OCI-LY7 (cell line): ENCODE measurements at regions of chr14 and their contacts with region 1.

Region 1: DNA sequence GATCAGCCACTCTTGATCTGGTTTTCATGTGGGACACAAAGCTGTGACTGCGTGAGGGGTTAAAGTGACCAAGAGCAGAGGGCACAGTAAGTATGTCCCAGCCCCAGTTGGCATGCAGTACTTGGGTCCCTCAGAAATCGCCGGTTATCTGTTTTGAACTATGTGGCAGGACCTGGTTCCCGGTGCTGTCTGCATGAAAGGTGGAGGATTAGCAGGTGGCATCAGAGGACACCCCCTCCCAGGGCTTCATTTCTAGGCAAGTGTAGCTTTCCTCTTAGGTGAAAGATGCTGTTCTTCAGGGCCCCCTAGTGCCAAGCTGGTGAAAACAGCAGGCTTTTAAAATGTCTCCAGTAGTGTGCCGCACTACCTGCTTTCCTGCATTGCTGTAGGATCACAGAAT is 57.1 kb downstream of the ATG14 start:
- DNase-seq: peak; percentile 68
- H3K4me3 ChIP-seq: no peak overlapping the region
- H3K27ac ChIP-seq: no peak overlapping the region
- H3K4me1 ChIP-seq: peaks cover 5% of the 10 kb centered on the region
- CTCF ChIP-seq: peak; percentile 82

Region 2: DNA sequence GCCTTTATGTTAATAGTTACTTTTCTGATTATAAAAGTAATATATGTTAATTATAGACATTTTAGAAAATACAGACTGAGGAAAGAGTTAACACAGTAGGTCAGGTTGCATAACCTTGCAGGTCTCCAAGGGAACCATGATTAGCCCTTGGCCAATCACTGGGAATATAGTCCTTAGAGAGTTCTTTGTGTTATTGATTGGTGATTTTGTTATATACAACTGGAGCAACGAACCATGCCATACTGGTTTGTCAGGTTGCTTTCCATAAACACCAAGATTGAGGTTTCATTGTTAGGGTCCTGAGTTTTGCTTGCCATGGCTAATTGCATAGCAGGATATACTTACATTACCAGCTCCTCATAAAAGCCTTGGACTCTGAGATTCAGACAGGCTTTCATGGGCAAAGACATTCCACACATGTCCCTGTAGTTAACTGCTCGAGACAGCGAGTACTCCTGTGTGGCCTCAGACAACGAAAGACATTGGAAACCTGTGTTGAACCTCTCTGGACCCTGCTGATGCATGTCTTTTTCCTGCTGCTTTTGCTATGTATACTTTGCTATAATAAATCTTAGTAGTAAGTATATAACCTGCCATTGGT is 269.3 kb before region 1 on chr14:
- CTCF ChIA-PET with region 1: no interaction called
- POLR2A ChIA-PET with region 1: no interaction called
- intact Hi-C with region 1: loop called (anchors 10 kb)
- DNase-seq: no peak
- H3K4me3 ChIP-seq: no peak overlapping the region
- H3K27ac ChIP-seq: no peak overlapping the region
- H3K4me1 ChIP-seq: no peaks in the 10 kb centered on the region
- CTCF ChIP-seq: no peak

Region 3: DNA sequence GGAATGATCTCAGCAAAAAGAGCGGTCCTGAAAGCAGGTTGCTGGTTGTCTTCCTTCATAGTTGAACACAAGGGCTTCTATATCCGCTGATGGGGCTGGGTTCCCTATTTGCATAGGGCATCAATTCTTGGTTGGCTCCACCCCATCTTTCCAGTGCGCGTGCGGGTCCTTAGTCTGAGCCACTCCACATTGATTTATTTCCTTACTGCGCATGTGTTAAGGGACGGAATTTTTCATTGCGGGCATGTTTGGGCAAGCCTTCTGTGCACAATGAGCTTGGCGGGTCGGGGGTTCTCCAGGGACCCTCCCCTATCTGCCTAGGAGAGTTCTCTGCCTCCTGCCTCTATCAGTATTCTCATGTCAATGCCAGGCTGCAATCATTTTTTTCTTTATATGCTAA is 141.9 kb before region 1 on chr14:
- CTCF ChIA-PET with region 1: interaction called, 3 read pairs
- POLR2A ChIA-PET with region 1: no interaction called
- intact Hi-C with region 1: loop called (anchors 1 kb)
- DNase-seq: no peak
- H3K4me3 ChIP-seq: no peak overlapping the region
- H3K27ac ChIP-seq: no peak overlapping the region
- H3K4me1 ChIP-seq: no peaks in the 10 kb centered on the region
- CTCF ChIP-seq: no peak

Region 4: GRCh38 chr14:55277972-55278740 is 76.3 kb before region 1 on chr14:
- CTCF ChIA-PET with region 1: interaction called, 3 read pairs
- POLR2A ChIA-PET with region 1: interaction called, 11 read pairs
- intact Hi-C with region 1: no loop called
- DNase-seq: peak; percentile 61
- H3K4me3 ChIP-seq: peak overlapping the region; percentile 24
- H3K27ac ChIP-seq: peak overlapping the region; percentile 74
- H3K4me1 ChIP-seq: peaks cover 49% of the 10 kb centered on the region
- CTCF ChIP-seq: no peak